ENCODE measurements at regions of chr5 and their contacts with region 1.

Region 1: DNA sequence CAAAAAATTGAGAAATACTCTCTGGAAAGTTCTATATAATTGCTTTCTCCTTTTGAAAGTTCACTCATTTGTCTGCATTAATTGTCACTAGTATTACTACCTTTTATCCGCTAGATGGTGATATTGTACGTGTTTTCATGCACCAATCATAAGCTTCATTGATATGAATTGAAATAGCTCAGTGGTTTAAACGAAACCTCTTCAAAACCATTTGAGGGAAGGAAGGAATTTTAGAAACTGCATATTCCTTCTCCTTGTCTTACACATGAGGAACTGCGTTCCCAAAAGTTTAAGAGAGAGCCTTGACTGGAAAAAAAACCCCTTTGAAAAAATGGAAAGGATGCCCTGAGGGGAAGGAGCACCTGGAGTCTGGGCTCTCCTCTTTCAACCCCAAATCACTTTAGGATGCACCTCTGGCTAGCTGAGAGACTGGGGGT is 98.6 kb downstream of the YTHDC2 start:
- DNase-seq: no peak
- H3K4me3 Mint-ChIP-seq: no peak overlapping the region
- H3K27ac Mint-ChIP-seq: no peak overlapping the region
- H3K4me1 Mint-ChIP-seq: no peaks in the 10 kb centered on the region
- H3K27me3 Mint-ChIP-seq: peaks cover 36% of the 10 kb centered on the region
- CTCF ChIP-seq: peak; percentile 35

Region 2: GRCh38 chr5:113663880-113664541 is 51.9 kb after region 1 on chr5:
- CTCF ChIA-PET with region 1: interaction called, 8 read pairs
- intact Hi-C with region 1: loop called (anchors 1 kb)
- DNase-seq: peak; percentile 37
- H3K4me3 Mint-ChIP-seq: no peak overlapping the region
- H3K27ac Mint-ChIP-seq: no peak overlapping the region
- H3K4me1 Mint-ChIP-seq: no peaks in the 10 kb centered on the region
- H3K27me3 Mint-ChIP-seq: peaks cover 39% of the 10 kb centered on the region
- CTCF ChIP-seq: peak; percentile 14

Region 3: GRCh38 chr5:114038756-114039155 is 426.7 kb after region 1 on chr5:
- CTCF ChIA-PET with region 1: no interaction called
- intact Hi-C with region 1: no loop called
- DNase-seq: no peak
- H3K4me3 Mint-ChIP-seq: no peak overlapping the region
- H3K27ac Mint-ChIP-seq: no peak overlapping the region
- H3K4me1 Mint-ChIP-seq: no peaks in the 10 kb centered on the region
- H3K27me3 Mint-ChIP-seq: no peaks in the 10 kb centered on the region
- CTCF ChIP-seq: no peak

Region 4: GRCh38 chr5:114305402-114306211 is 693.5 kb after region 1 on chr5:
- CTCF ChIA-PET with region 1: no interaction called
- intact Hi-C with region 1: loop called (anchors 5 kb)
- DNase-seq: peak; percentile 17
- H3K4me3 Mint-ChIP-seq: no peak overlapping the region
- H3K27ac Mint-ChIP-seq: no peak overlapping the region
- H3K4me1 Mint-ChIP-seq: no peaks in the 10 kb centered on the region
- H3K27me3 Mint-ChIP-seq: peaks cover 14% of the 10 kb centered on the region
- CTCF ChIP-seq: peak; percentile 38

Region 5: DNA sequence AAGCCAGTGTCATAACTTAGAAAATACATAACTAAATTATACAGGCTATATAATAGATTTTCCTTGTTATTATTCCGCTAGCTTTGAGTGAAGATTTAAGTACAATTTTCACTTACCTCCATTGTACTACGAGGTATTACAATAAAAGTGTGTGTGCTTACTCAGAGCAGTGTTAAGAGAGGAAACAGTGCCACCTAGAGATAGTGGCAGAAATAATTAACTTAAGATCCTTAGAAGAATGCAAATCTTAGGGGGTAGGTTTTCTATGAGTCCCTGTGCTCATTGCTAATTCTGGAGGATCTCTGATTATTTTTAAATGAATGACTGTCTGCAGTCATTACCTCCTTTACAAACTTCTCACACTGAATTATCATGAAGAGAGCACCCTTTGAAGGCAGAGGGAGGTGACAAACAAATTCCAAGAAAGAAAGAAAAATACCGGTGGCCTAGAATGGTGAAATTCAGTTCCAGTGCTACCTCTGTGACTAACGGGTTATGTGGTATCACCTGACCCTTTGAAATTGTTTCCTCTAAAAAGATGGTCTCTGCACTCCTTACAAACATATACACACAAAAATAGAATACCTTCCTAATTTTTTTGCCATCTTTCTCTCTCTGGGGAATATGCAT is 1177.8 kb after region 1 on chr5:
- CTCF ChIA-PET with region 1: no interaction called
- intact Hi-C with region 1: loop called (anchors 1 kb)
- DNase-seq: no peak
- H3K4me3 Mint-ChIP-seq: no peak overlapping the region
- H3K27ac Mint-ChIP-seq: no peak overlapping the region
- H3K4me1 Mint-ChIP-seq: no peaks in the 10 kb centered on the region
- H3K27me3 Mint-ChIP-seq: no peaks in the 10 kb centered on the region
- CTCF ChIP-seq: peak; percentile 19

Region 6: GRCh38 chr5:115246361-115246991 is 1634.4 kb after region 1 on chr5:
- CTCF ChIA-PET with region 1: no interaction called
- intact Hi-C with region 1: loop called (anchors 5 kb)
- DNase-seq: no peak
- H3K4me3 Mint-ChIP-seq: no peak overlapping the region
- H3K27ac Mint-ChIP-seq: no peak overlapping the region
- H3K4me1 Mint-ChIP-seq: peaks cover 31% of the 10 kb centered on the region
- H3K27me3 Mint-ChIP-seq: no peaks in the 10 kb centered on the region
- CTCF ChIP-seq: peak; percentile 70

Measured in Calu3 (cell line).